HepG2 (cell line): ENCODE measurements at regions of chr5 and their contacts with region 1.

Region 1: GRCh38 chr5:35230038-35230631 is at the start of gene PRLR:
- DNase-seq: peak; percentile 69
- ATAC-seq: peak; percentile 90
- H3K4me3 ChIP-seq: peak within 1 kb of the TSS; percentile 39 to 77 (median 64)
- H3K27ac ChIP-seq: peak within 1 kb of the TSS; percentile 53
- H3K4me1 ChIP-seq: peaks cover 28% of the 10 kb centered on the region
- H3K27me3 ChIP-seq: no peaks in the 10 kb centered on the region
- CTCF ChIP-seq: no peak
- EP300 ChIP-seq: peak in 1 of 2 experiments; percentile 38; a peak in 1 of 4 replicates
- POLR2A ChIP-seq: peak in 1 of 2 experiments; percentile 40; a peak in 1 of 4 replicates
- RAD21 ChIP-seq: 0 out of 2 replicates have a peak, but pooled peaks have one; percentile 18
- total RNA-seq, gene PRLR: 13.3 and 22.2 TPM in 2 replicates

Region 2: DNA sequence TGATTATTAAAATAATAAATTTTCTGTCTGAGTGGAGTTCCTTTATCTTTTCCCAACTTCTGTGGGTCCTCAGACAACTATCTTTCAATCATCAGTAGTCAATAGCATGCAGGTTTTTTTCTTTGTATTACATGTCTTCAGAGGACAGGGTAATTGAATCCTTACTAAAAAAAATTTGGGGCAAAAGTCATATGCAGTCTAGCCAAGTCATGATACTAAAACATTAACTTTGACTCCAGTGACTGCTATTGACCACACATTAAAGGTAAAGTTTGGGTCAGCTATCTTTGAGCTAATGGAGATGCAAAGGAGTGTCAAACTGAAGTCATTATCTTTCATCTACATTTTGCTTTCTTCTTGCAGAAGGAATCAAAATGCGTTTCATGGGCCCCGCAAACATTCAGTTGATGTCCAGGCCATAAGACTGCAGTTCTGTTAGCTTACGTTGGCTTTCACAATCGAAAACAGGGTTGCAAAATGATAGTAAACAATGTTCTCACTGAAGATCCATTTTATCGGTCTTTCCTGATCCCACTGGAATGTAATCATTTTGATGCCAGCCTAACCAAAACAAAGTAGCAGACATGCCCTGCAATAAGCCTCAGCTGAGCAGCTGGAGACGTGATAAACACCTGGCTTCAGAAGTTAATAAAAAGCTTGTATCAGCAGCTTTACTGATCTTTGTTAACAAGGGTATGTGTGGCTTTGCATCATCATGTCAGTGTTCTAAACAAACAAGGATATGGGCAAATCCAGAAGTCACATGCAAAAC is 186.3 kb after region 1 on chr5:
- CTCF ChIA-PET with region 1: no interaction called
- POLR2A ChIA-PET with region 1: no interaction called
- in situ Hi-C with region 1: no loop called
- intact Hi-C with region 1: loop called (anchors 10 kb)
- DNase-seq: peak; percentile 73
- ATAC-seq: peak; percentile 75
- H3K4me3 ChIP-seq: peak overlapping the region in 1 of 3 experiments; percentile 31; a peak in 2 of 6 replicates
- H3K27ac ChIP-seq: no peak overlapping the region
- H3K4me1 ChIP-seq: peaks cover 45% of the 10 kb centered on the region
- H3K27me3 ChIP-seq: no peaks in the 10 kb centered on the region
- CTCF ChIP-seq: no peak
- EP300 ChIP-seq: peak in 1 of 2 experiments; percentile 54; a peak in 1 of 4 replicates
- POLR2A ChIP-seq: no peak
- RAD21 ChIP-seq: no peak

Region 3: DNA sequence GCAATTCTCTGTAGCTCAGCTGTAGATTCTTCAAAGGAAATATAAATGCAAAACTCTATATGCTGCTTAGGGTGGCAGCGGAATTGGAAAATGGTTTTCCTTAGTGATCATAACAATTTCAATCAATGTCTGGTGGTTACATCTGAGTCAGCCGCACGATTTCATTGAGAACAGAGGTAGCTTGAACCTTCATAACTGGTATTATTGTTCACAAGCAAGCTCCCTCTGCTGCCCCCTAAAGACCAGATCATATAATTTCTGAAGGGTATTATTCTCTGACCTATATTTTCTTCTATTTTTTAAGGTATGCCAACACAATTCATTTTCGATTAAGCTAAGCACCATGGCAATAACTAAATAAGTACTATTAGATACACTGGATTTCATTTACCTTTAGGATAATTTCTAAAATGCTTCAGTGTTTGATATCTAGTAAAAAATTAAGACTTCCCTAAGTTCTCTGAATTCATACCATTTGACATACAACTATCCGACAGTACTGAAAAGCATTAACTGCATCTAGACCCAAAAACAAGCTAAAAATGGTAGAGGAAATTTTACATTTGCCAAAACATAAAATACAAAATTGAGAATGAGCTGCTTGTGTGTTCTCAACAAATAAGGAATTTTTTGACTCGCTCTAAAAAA is 206.4 kb after region 1 on chr5:
- CTCF ChIA-PET with region 1: no interaction called
- POLR2A ChIA-PET with region 1: no interaction called
- in situ Hi-C with region 1: no loop called
- intact Hi-C with region 1: loop called (anchors 2 kb)
- DNase-seq: peak; percentile 47
- ATAC-seq: peak; percentile 50; the same call in 1 of the 3 replicates
- H3K4me3 ChIP-seq: no peak overlapping the region
- H3K27ac ChIP-seq: no peak overlapping the region
- H3K4me1 ChIP-seq: no peaks in the 10 kb centered on the region
- H3K27me3 ChIP-seq: peaks cover 0 to 1% of the 10 kb centered on the region in 2 experiments; a peak in 1 of 5 replicates
- CTCF ChIP-seq: peak; percentile 51
- EP300 ChIP-seq: no peak
- POLR2A ChIP-seq: no peak
- RAD21 ChIP-seq: no peak

Region 4: GRCh38 chr5:35598707-35599370 is 368.7 kb after region 1 on chr5:
- CTCF ChIA-PET with region 1: interaction called, 3 read pairs
- POLR2A ChIA-PET with region 1: no interaction called
- in situ Hi-C with region 1: loop called (anchors 25 kb)
- intact Hi-C with region 1: loop called (anchors 1 kb)
- DNase-seq: peak; percentile 62
- ATAC-seq: peak; percentile 95
- H3K4me3 ChIP-seq: no peak overlapping the region
- H3K27ac ChIP-seq: no peak overlapping the region
- H3K4me1 ChIP-seq: no peaks in the 10 kb centered on the region
- H3K27me3 ChIP-seq: no peaks in the 10 kb centered on the region
- CTCF ChIP-seq: peak; percentile 79
- EP300 ChIP-seq: no peak
- POLR2A ChIP-seq: no peak
- RAD21 ChIP-seq: peak; percentile 65; the same call in 1 of the 2 replicates

Region 5: DNA sequence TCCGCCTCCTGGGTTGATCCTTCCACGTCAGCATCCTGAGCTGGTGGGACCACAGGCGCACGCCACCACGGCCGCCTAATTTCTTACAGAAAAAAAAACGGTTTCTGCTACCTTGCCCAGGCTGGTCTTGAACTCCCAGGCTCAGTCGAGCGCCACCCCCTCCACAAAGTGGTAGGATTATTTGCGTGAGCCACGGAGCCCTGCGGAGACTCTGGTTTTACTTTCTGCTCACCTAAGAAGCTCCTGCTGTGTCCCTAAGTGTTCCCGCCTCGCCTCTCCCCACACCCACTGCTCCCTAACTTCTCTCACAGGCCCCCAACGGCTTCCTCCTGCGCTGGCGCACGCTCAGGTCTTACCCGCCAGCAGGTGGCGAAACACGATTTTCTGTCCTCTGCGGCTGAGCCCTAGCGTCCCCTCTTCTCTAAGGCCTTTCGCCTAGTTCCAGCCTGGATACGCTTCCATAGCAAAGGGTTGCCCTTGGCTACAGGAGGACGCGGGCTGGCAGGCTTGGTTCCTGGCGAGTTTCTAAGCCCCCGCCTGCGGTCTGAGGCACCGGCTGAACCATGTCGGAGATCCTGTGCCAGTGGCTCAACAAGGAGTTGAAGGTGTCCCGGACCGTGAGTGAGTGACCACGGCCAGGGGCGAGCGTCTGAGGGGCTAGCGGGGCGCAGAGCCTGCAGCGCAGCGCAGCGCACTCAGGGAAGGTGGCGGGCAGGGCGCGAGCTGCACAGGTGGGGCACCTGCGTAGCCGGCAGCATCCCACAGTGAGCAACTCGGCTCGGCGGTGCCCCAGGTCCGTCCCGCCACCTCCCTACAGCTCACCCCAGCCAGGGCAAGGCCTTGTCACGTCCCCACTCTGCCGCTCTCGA is 387.5 kb after region 1 on chr5 and contains the start of gene SPEF2:
- CTCF ChIA-PET with region 1: no interaction called
- POLR2A ChIA-PET with region 1: no interaction called
- in situ Hi-C with region 1: loop called (anchors 25 kb)
- intact Hi-C with region 1: no loop called
- DNase-seq: peak; percentile 84
- ATAC-seq: peak; percentile 99
- H3K4me3 ChIP-seq: peak within 1 kb of the TSS; percentile 85 to 96 (median 92)
- H3K27ac ChIP-seq: peak within 1 kb of the TSS; percentile 30
- H3K4me1 ChIP-seq: peaks cover 13% of the 10 kb centered on the region
- H3K27me3 ChIP-seq: no peaks in the 10 kb centered on the region
- CTCF ChIP-seq: peak; percentile 97
- EP300 ChIP-seq: no peak
- POLR2A ChIP-seq: no peak
- RAD21 ChIP-seq: peak; percentile 70; the same call in 1 of the 2 replicates
- total RNA-seq, gene SPEF2: 2.3 and 2.4 TPM in 2 replicates

Region 6: DNA sequence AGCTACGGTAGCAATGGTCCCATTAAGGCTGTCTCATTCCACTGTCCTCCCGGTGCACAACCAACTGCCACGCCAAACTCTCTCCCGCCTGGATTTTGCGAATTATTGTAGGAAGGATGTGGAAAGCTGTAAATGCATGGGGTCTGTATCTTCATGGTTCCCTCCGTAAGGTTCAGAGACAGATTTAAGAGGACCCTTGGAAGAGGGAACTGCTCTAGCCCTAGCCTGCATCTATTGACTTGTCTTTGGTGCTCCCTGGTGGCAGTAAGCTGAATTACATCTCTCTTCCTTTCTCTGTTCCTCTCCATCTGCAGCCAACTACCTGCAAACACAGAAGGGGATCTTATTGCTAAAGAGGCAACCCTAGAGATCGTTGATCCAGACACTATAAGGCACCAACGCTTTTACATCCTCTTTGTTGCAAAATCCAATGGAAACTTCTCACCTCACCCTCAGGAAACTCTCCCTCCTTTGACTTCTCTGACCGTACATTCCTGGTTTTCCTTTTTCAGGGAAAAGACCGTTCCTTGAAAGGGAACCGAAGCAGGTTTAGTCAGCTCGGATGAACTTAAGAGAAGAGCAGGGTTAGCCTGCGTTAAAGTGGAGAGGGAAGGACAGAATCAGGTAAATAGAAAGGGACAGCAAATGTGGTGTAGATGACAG is 696.4 kb after region 1 on chr5:
- CTCF ChIA-PET with region 1: no interaction called
- POLR2A ChIA-PET with region 1: no interaction called
- in situ Hi-C with region 1: no loop called
- intact Hi-C with region 1: loop called (anchors 5 kb)
- DNase-seq: peak; percentile 17
- ATAC-seq: peak; percentile 87
- H3K4me3 ChIP-seq: no peak overlapping the region
- H3K27ac ChIP-seq: no peak overlapping the region
- H3K4me1 ChIP-seq: no peaks in the 10 kb centered on the region
- H3K27me3 ChIP-seq: no peaks in the 10 kb centered on the region; a peak in 1 of 5 replicates
- CTCF ChIP-seq: peak; percentile 84
- EP300 ChIP-seq: no peak
- POLR2A ChIP-seq: no peak
- RAD21 ChIP-seq: peak; percentile 48; the same call in 1 of the 2 replicates